MCF 10A (cell line): ENCODE measurements at regions of chr14 and their contacts with region 1.

Region 1: GRCh38 chr14:53306267-53306721 is 153.2 kb upstream of the DDHD1 start:
- DNase-seq: peak; percentile 66
- H3K4me3 Mint-ChIP-seq: peak overlapping the region; percentile 74
- H3K27ac Mint-ChIP-seq: peak overlapping the region; percentile 63
- H3K4me1 Mint-ChIP-seq: no peaks in the 10 kb centered on the region
- H3K27me3 Mint-ChIP-seq: no peaks in the 10 kb centered on the region
- CTCF ChIP-seq: peak; percentile 68

Region 2: GRCh38 chr14:51780006-51780692 is 1526.1 kb before region 1 on chr14:
- CTCF ChIA-PET with region 1: no interaction called
- POLR2A ChIA-PET with region 1: no interaction called
- intact Hi-C with region 1: loop called (anchors 10 kb)
- DNase-seq: peak; percentile 77
- H3K4me3 Mint-ChIP-seq: no peak overlapping the region
- H3K27ac Mint-ChIP-seq: no peak overlapping the region
- H3K4me1 Mint-ChIP-seq: peaks cover 23% of the 10 kb centered on the region
- H3K27me3 Mint-ChIP-seq: no peaks in the 10 kb centered on the region
- CTCF ChIP-seq: peak; percentile 68

Region 3: DNA sequence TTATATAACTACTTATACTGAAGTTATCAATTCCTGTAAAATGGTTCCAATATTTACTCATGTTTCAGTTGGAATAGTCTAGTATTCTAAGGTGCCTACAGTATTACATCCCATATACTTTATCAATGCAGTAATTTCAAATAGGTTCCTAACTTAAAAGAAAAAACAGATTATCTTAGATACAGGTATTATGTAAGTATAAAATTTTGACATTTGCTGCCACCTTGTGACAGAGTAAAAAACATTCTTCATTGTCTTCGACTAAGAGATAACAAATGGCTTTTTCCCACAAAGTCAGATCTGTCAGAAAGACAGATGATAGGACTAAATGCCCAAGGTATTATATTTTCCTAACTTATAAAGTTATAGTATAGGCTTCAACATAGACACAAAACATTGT is 832.7 kb before region 1 on chr14:
- CTCF ChIA-PET with region 1: no interaction called
- POLR2A ChIA-PET with region 1: no interaction called
- intact Hi-C with region 1: loop called (anchors 10 kb)
- DNase-seq: peak; percentile 53
- H3K4me3 Mint-ChIP-seq: no peak overlapping the region
- H3K27ac Mint-ChIP-seq: no peak overlapping the region
- H3K4me1 Mint-ChIP-seq: no peaks in the 10 kb centered on the region
- H3K27me3 Mint-ChIP-seq: no peaks in the 10 kb centered on the region
- CTCF ChIP-seq: peak; percentile 32

Region 4: DNA sequence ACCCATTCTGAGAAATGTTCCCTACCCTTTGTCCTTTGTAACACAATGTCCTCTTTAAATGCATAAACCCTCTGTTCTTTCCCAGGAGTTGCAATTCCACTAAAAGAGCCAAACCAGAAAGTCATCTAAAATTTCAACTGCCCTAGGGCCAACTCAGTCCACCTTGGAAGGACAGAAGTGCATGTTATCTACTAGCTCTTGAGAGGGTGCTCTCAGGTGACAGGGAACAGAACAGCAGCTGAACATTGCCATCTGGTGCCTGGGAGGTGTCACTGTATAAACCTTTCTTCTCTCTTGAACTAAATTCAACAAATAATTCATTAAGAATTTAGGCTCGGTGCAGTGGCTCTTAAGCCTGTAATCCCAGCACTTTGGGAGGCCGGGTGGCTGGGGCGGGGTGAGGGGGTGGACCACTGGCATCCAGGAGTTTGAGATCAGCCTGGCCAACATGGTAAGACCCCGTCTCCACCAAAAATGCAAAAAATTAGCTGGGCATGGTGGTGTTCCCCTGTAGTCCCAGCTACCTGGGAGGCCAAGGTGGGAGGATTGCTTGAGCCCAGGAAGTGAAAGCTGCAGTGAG is 345.1 kb before region 1 on chr14:
- CTCF ChIA-PET with region 1: interaction called, 3 read pairs
- POLR2A ChIA-PET with region 1: no interaction called
- intact Hi-C with region 1: loop called (anchors 10 kb)
- DNase-seq: peak; percentile 75
- H3K4me3 Mint-ChIP-seq: no peak overlapping the region
- H3K27ac Mint-ChIP-seq: no peak overlapping the region
- H3K4me1 Mint-ChIP-seq: peaks cover 11% of the 10 kb centered on the region
- H3K27me3 Mint-ChIP-seq: no peaks in the 10 kb centered on the region
- CTCF ChIP-seq: peak; percentile 64

Region 5: DNA sequence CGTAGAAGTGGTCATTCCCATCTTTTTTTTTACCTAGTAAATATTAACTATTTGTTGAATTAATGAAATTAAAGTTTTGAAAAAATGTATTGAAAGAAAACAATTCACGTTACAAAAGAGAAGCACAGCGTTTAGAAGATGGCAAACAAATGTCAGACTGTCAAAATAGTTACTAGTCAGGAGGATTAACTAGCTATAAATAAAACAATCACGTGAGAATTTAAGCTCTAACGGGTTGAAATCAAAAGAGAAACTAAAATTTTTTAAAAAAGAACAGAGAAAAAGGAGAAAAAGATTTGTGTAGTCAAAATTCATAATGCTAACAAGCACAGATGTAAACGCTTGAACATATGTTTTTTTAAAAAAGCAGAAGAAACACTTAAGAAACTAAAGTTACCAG is 179.6 kb before region 1 on chr14:
- CTCF ChIA-PET with region 1: no interaction called
- POLR2A ChIA-PET with region 1: no interaction called
- intact Hi-C with region 1: no loop called
- DNase-seq: no peak
- H3K4me3 Mint-ChIP-seq: no peak overlapping the region
- H3K27ac Mint-ChIP-seq: no peak overlapping the region
- H3K4me1 Mint-ChIP-seq: peaks cover 6% of the 10 kb centered on the region
- H3K27me3 Mint-ChIP-seq: no peaks in the 10 kb centered on the region
- CTCF ChIP-seq: no peak

Region 6: DNA sequence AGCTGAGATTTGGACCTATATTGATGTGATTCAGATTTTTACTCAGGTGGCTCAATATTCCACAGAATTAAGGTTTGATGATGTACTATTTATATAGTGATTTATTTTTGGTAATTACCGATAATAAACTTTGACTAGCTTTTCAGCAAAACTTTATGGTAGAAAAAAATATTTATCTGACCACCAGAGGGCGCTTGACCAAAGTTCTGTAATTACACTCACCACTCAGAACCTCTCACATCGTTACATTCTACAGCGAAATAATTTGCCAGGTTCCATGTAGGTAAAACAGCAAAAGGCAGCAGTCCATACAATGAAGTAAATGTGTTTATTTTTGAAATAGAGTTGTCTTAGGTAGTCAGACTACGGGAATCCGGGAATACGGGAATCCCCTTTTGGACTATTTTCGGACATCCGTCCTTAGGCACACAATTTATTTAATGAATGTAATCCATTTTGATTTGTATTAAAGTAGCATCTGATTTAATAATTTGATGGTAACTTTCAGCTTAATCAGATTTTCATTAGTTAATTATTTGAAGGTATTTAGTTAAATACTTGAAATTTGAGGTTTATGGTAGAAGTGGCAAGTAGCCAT is 10.2 kb before region 1 on chr14:
- CTCF ChIA-PET with region 1: interaction called, 46 read pairs
- POLR2A ChIA-PET with region 1: no interaction called
- intact Hi-C with region 1: no loop called
- DNase-seq: peak; percentile 52
- H3K4me3 Mint-ChIP-seq: no peak overlapping the region
- H3K27ac Mint-ChIP-seq: no peak overlapping the region
- H3K4me1 Mint-ChIP-seq: no peaks in the 10 kb centered on the region
- H3K27me3 Mint-ChIP-seq: no peaks in the 10 kb centered on the region
- CTCF ChIP-seq: peak; percentile 57

Region 7: GRCh38 chr14:53325176-53325806 is 19.0 kb after region 1 on chr14:
- CTCF ChIA-PET with region 1: interaction called, 11 read pairs
- POLR2A ChIA-PET with region 1: no interaction called
- intact Hi-C with region 1: no loop called
- DNase-seq: no peak
- H3K4me3 Mint-ChIP-seq: no peak overlapping the region
- H3K27ac Mint-ChIP-seq: no peak overlapping the region
- H3K4me1 Mint-ChIP-seq: peaks cover 20% of the 10 kb centered on the region
- H3K27me3 Mint-ChIP-seq: no peaks in the 10 kb centered on the region
- CTCF ChIP-seq: no peak